ENCODE measurements at regions of chr1 and their contacts with region 1.

Region 1: DNA sequence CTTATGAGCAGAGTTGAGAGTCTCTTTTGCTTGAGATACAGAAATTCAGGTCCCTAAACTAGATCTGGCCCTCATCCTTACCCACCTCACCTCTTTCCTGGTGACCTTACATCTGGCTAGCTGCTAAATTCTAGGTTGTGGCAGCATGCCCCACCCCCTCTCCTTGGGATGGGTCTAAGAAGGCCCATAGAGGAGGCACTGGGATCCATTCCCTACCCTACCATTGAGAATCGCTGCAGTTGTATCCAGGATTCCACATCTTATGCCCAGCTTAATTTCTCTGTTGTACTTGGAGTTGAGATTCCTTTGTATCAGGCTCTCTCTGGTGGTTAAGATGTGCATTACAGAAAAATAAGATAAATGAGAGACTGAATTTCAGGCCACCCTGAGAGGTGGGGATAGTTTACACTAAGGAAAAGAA is 9.5 kb upstream of the TMEM39B start:
- DNase-seq: peak in 3 of 14 experiments; percentile 53 to 60 (median 56)
- ATAC-seq: peak; percentile 73
- H3K4me3 ChIP-seq: no peak overlapping the region
- H3K4me3 Mint-ChIP-seq: no peak overlapping the region
- H3K27ac ChIP-seq: no peak overlapping the region
- H3K27ac Mint-ChIP-seq: peak overlapping the region; percentile 46
- H3K4me1 ChIP-seq: peaks cover 14% of the 10 kb centered on the region
- H3K4me1 Mint-ChIP-seq: peaks cover 19% of the 10 kb centered on the region
- H3K27me3 ChIP-seq: no peaks in the 10 kb centered on the region
- H3K27me3 Mint-ChIP-seq: no peaks in the 10 kb centered on the region
- CTCF ChIP-seq: peak; percentile 72

Region 2: GRCh38 chr1:31663622-31664452 is 399.4 kb before region 1 on chr1:
- CTCF ChIA-PET with region 1: no interaction called
- POLR2A ChIA-PET with region 1: no interaction called
- intact Hi-C with region 1: loop called (anchors 1 kb)
- DNase-seq: peak in 13 of 14 experiments; percentile 23 to 72 (median 54)
- ATAC-seq: peak; percentile 54
- H3K4me3 ChIP-seq: no peak overlapping the region
- H3K4me3 Mint-ChIP-seq: no peak overlapping the region
- H3K27ac ChIP-seq: no peak overlapping the region
- H3K27ac Mint-ChIP-seq: no peak overlapping the region
- H3K4me1 ChIP-seq: no peaks in the 10 kb centered on the region
- H3K4me1 Mint-ChIP-seq: no peaks in the 10 kb centered on the region
- H3K27me3 ChIP-seq: no peaks in the 10 kb centered on the region
- H3K27me3 Mint-ChIP-seq: no peaks in the 10 kb centered on the region
- CTCF ChIP-seq: peak; percentile 80

Region 3: GRCh38 chr1:31762726-31763670 is 300.3 kb before region 1 on chr1:
- CTCF ChIA-PET with region 1: no interaction called
- POLR2A ChIA-PET with region 1: interaction called, 3 read pairs
- intact Hi-C with region 1: loop called in 1 of 2 experiments (anchors 5 kb)
- DNase-seq: peak; percentile 48 to 88 (median 62)
- ATAC-seq: peak; percentile 51
- H3K4me3 ChIP-seq: peak overlapping the region; percentile 42
- H3K4me3 Mint-ChIP-seq: peak overlapping the region; percentile 86
- H3K27ac ChIP-seq: no peak overlapping the region
- H3K27ac Mint-ChIP-seq: no peak overlapping the region
- H3K4me1 ChIP-seq: peaks cover 46% of the 10 kb centered on the region
- H3K4me1 Mint-ChIP-seq: peaks cover 26% of the 10 kb centered on the region
- H3K27me3 ChIP-seq: peaks cover 11% of the 10 kb centered on the region in 2 experiments
- H3K27me3 Mint-ChIP-seq: peaks cover 15% of the 10 kb centered on the region
- CTCF ChIP-seq: peak; percentile 61

Region 4: GRCh38 chr1:31815752-31816500 is 247.3 kb before region 1 on chr1 and contains the start of gene SPOCD1:
- CTCF ChIA-PET with region 1: no interaction called
- POLR2A ChIA-PET with region 1: no interaction called
- intact Hi-C with region 1: loop called in 1 of 2 experiments (anchors 5 kb)
- DNase-seq: peak; percentile 70 to 91 (median 80)
- ATAC-seq: peak; percentile 96
- H3K4me3 ChIP-seq: no peak within 1 kb of the TSS
- H3K4me3 Mint-ChIP-seq: no peak within 1 kb of the TSS
- H3K27ac ChIP-seq: no peak within 1 kb of the TSS
- H3K27ac Mint-ChIP-seq: no peak within 1 kb of the TSS
- H3K4me1 ChIP-seq: peaks cover 12% of the 10 kb centered on the region
- H3K4me1 Mint-ChIP-seq: peaks cover 22% of the 10 kb centered on the region
- H3K27me3 ChIP-seq: no peaks in the 10 kb centered on the region
- H3K27me3 Mint-ChIP-seq: no peaks in the 10 kb centered on the region
- CTCF ChIP-seq: peak; percentile 79
- total RNA-seq, gene SPOCD1: 0.11 to 0.27 TPM

Region 5: GRCh38 chr1:31977385-31978131 is 85.7 kb before region 1 on chr1:
- CTCF ChIA-PET with region 1: no interaction called
- POLR2A ChIA-PET with region 1: no interaction called
- intact Hi-C with region 1: loop called in 1 of 2 experiments (anchors 5 kb)
- DNase-seq: peak in 1 of 14 experiments; percentile 34
- ATAC-seq: no peak
- H3K4me3 ChIP-seq: no peak overlapping the region
- H3K4me3 Mint-ChIP-seq: no peak overlapping the region
- H3K27ac ChIP-seq: no peak overlapping the region
- H3K27ac Mint-ChIP-seq: no peak overlapping the region
- H3K4me1 ChIP-seq: peaks cover 24% of the 10 kb centered on the region
- H3K4me1 Mint-ChIP-seq: peaks cover 22% of the 10 kb centered on the region
- H3K27me3 ChIP-seq: no peaks in the 10 kb centered on the region
- H3K27me3 Mint-ChIP-seq: no peaks in the 10 kb centered on the region
- CTCF ChIP-seq: peak; percentile 16

Measured in CD4-positive, alpha-beta T cell (primary cell).